Common myeloid progenitor, CD34-positive (primary cell): ENCODE measurements at regions of chr6 and their contacts with region 1.

Region 1: DNA sequence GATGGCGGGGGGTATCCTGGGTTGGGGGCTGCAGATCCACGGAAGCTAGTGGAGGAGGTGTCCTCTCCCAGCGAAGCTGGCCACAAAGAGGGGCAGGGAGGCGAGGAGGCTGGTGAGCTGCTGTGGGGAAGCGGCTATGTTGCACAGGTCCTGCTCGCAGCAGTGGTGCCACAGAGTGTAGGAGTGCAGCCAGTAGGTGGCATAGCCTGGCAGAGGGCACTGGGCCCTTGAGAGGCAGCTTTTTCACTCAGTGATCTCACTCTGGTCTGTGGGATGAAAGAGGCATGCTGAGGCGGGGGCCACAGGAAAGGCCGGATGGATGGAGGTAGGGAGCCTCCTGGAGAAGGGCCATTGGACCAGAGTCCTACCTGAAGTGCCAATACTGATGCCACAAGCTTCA is 2.9 kb upstream of the LY6G6D start:
- DNase-seq: peak; percentile 68 to 80 (median 80)
- H3K4me3 ChIP-seq: no peak overlapping the region
- H3K27ac ChIP-seq: no peak overlapping the region
- H3K4me1 ChIP-seq: peaks cover 5 to 52% (median 36%) of the 10 kb centered on the region in 4 experiments
- H3K27me3 ChIP-seq: no peaks in the 10 kb centered on the region

Region 2: GRCh38 chr6:31568537-31568961 is 143.7 kb before region 1 on chr6:
- CTCF ChIA-PET with region 1: no interaction called
- POLR2A ChIA-PET with region 1: no interaction called
- DNase-seq: peak in 2 of 3 donors; percentile 63 to 66
- H3K4me3 ChIP-seq: no peak overlapping the region
- H3K27ac ChIP-seq: no peak overlapping the region
- H3K4me1 ChIP-seq: peaks cover 2 to 35% (median 10%) of the 10 kb centered on the region in 4 experiments
- H3K27me3 ChIP-seq: no peaks in the 10 kb centered on the region

Region 3: DNA sequence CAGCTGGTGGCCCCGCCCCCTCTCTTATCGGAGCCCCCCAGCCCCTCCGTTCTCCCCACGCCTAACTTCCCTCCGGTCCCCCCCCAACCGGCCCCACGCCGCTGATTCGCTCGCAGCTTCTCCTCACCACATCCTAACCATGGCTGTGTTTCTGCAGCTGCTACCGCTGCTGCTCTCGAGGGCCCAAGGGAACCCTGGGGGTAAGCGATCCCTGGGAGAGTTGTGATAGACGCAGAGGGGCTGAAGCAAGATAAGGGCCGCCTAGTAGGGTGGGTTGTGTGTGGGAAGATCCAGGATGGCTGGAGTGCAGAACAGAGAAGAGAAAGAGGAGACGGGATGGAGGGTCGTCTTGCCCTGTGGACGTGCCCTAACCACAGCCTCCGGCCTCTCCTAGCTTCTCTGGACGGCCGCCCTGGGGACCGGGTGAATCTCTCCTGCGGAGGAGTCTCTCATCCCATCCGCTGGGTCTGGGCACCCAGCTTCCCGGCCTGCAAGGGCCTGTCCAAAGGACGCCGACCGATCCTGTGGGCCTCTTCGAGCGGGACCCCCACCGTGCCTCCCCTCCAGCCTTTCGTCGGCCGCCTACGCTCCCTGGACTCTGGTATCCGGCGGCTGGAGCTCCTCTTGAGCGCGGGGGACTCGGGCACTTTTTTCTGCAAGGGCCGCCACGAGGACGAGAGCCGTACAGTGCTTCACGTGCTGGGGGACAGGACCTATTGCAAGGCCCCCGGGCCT is 11.1 kb after region 1 on chr6 and contains the start of gene MPIG6B:
- CTCF ChIA-PET with region 1: interaction called, 136 read pairs
- POLR2A ChIA-PET with region 1: interaction called, 16 read pairs
- DNase-seq: peak in 2 of 3 donors; percentile 73 to 80
- H3K4me3 ChIP-seq: peak within 1 kb of the TSS in 5 of 7 experiments; percentile 27 to 69 (median 56)
- H3K27ac ChIP-seq: peak within 1 kb of the TSS; percentile 33 to 65
- H3K4me1 ChIP-seq: peaks cover 11 to 58% (median 50%) of the 10 kb centered on the region in 4 experiments
- H3K27me3 ChIP-seq: no peaks in the 10 kb centered on the region

Region 4: GRCh38 chr6:31729515-31729978 is 17.3 kb after region 1 on chr6:
- CTCF ChIA-PET with region 1: interaction called, 136 read pairs
- POLR2A ChIA-PET with region 1: interaction called, 16 read pairs
- DNase-seq: peak; percentile 88 to 91 (median 91)
- H3K4me3 ChIP-seq: peak overlapping the region; percentile 81 to 100 (median 95)
- H3K27ac ChIP-seq: peak overlapping the region; percentile 62 to 88
- H3K4me1 ChIP-seq: peaks cover 20 to 78% (median 67%) of the 10 kb centered on the region in 4 experiments
- H3K27me3 ChIP-seq: no peaks in the 10 kb centered on the region

Region 5: GRCh38 chr6:31739639-31740396 is 27.5 kb after region 1 on chr6 and contains the start of gene MSH5:
- CTCF ChIA-PET with region 1: interaction called, 18 read pairs
- POLR2A ChIA-PET with region 1: interaction called, 5 read pairs
- DNase-seq: peak; percentile 96 to 98 (median 97)
- H3K4me3 ChIP-seq: peak within 1 kb of the TSS; percentile 71 to 100 (median 75)
- H3K27ac ChIP-seq: peak within 1 kb of the TSS; percentile 99
- H3K4me1 ChIP-seq: peaks cover 15 to 56% (median 44%) of the 10 kb centered on the region in 4 experiments
- H3K27me3 ChIP-seq: no peaks in the 10 kb centered on the region

Region 6: GRCh38 chr6:31827286-31828079 is 115.2 kb after region 1 on chr6 and contains the start of gene HSPA1B:
- CTCF ChIA-PET with region 1: interaction called, 11 read pairs
- POLR2A ChIA-PET with region 1: interaction called, 9 read pairs
- DNase-seq: peak; percentile 100
- H3K4me3 ChIP-seq: peak within 1 kb of the TSS; percentile 72 to 94 (median 83)
- H3K27ac ChIP-seq: peak within 1 kb of the TSS; percentile 88 to 96
- H3K4me1 ChIP-seq: peaks cover 19 to 58% (median 42%) of the 10 kb centered on the region in 4 experiments
- H3K27me3 ChIP-seq: no peaks in the 10 kb centered on the region

Region 7: GRCh38 chr6:31834434-31835198 is 122.3 kb after region 1 on chr6:
- CTCF ChIA-PET with region 1: interaction called, 11 read pairs
- POLR2A ChIA-PET with region 1: interaction called, 4 read pairs
- DNase-seq: peak; percentile 80 to 86 (median 82)
- H3K4me3 ChIP-seq: peak overlapping the region; percentile 72 to 99 (median 92)
- H3K27ac ChIP-seq: peak overlapping the region; percentile 98 to 99
- H3K4me1 ChIP-seq: peaks cover 36 to 70% (median 61%) of the 10 kb centered on the region in 4 experiments
- H3K27me3 ChIP-seq: no peaks in the 10 kb centered on the region